ENCODE measurements at regions of chr17 and their contacts with region 1.

Region 1: GRCh38 chr17:40113110-40113906 is 8.5 kb upstream of the MSL1 start:
- DNase-seq: peak; percentile 98
- ATAC-seq: peak; percentile 80
- H3K4me3 Mint-ChIP-seq: peak overlapping the region; percentile 75
- H3K27ac Mint-ChIP-seq: peak overlapping the region; percentile 94
- H3K4me1 Mint-ChIP-seq: peaks cover 49% of the 10 kb centered on the region
- H3K27me3 Mint-ChIP-seq: no peaks in the 10 kb centered on the region
- CTCF ChIP-seq: peak; percentile 91

Region 2: DNA sequence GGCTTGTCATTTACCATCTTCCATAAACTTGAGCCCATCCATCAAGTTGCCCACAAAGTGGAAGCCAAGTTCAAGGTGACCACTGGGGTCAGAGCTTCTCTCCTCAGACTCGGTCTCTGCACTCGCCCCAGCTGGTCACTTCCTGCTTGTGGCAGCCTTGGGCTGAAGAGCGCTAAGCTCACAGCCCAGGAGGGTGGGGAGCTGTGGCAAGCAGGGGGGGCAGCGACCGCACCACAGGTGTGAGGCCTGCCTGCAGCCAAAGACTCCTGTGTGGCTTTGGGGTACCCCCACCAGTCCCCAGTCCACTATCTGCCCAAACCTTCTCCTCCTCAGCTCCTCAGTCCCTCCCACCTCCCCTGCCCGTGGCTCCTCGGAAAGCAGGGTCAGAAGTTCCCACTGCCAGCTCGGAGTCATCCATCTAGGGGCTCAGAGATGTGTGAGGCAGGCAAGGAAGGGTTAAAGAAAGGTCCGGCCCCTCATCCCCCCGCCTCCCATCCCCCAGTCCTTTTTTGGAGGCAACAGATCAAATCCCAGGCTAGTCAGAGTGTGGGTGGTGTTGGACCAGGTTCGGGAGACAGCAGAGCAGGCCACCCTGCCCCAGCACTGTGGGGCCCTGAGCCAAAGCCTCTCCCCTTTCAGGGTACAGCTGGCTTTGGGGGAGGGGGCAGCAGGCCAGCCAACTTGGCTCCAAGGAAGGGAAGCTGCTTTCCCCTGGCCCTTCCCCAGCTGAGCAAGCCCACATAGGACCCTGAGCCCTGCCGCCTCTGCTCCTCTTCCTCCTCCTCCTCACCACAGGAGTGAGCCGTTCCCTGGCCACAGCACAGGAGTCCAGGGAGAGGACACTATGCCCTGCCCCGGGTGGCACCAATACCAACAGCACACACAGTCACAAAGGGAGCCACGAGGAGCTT is 94.8 kb before region 1 on chr17:
- CTCF ChIA-PET with region 1: interaction called, 27 read pairs
- POLR2A ChIA-PET with region 1: no interaction called
- intact Hi-C with region 1: no loop called
- DNase-seq: no peak
- ATAC-seq: no peak
- H3K4me3 Mint-ChIP-seq: no peak overlapping the region
- H3K27ac Mint-ChIP-seq: no peak overlapping the region
- H3K4me1 Mint-ChIP-seq: no peaks in the 10 kb centered on the region
- H3K27me3 Mint-ChIP-seq: no peaks in the 10 kb centered on the region
- CTCF ChIP-seq: no peak

Region 3: DNA sequence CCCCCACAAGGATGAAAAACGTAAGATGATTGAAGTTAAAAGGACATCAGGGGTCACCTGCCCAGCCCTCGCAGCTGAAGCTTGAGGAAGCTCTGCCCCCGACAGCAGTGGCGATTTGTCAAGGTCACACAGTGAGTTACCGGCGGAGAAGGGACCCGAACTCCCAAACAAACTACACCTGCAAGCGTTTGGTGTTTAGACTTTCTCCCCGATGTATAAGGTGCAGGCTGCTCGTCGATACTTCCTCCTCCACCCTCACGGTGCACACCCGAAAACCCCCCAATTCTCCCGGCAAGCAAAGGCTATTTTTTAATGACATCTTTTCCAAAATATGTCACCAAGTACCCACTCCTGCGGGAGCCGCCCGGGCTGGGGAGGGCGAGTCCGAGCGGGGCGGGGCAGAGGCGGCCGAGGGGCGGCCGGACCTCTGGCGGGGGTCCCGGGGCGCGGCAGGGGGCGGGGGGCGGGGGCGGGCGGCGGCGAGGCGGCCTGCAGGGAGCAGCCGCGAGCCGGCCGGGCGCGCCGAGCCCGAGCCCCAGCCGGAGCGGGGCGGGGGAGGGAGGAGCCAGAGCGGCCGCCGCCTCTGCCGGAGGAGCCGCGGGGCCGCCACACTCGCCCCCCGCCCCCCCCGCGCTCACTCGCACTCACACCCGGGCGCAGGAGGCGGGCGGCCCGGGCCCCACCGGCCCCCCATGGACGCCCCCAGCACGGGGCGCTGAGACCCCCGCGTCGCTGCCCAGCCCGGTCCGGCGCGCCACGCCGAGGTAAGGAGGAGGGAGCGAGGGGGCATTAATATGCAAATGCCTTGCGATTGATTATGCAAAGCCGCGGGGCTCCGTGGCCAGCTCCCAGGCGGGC is 50.8 kb before region 1 on chr17 and contains the start of gene THRA:
- CTCF ChIA-PET with region 1: interaction called, 25 read pairs
- POLR2A ChIA-PET with region 1: interaction called, 5 read pairs
- intact Hi-C with region 1: loop called (anchors 5 kb)
- DNase-seq: peak; percentile 70
- ATAC-seq: peak; percentile 85
- H3K4me3 Mint-ChIP-seq: peak within 1 kb of the TSS; percentile 89
- H3K27ac Mint-ChIP-seq: peak within 1 kb of the TSS; percentile 84
- H3K4me1 Mint-ChIP-seq: peaks cover 43% of the 10 kb centered on the region
- H3K27me3 Mint-ChIP-seq: no peaks in the 10 kb centered on the region
- CTCF ChIP-seq: no peak
- total RNA-seq, gene THRA: 11.1 to 13.8 TPM

Region 4: GRCh38 chr17:40086150-40087044 is 26.9 kb before region 1 on chr17:
- CTCF ChIA-PET with region 1: interaction called, 29 read pairs
- POLR2A ChIA-PET with region 1: no interaction called
- intact Hi-C with region 1: no loop called
- DNase-seq: peak; percentile 71
- ATAC-seq: peak; percentile 78
- H3K4me3 Mint-ChIP-seq: no peak overlapping the region
- H3K27ac Mint-ChIP-seq: peak overlapping the region; percentile 55
- H3K4me1 Mint-ChIP-seq: peaks cover 8% of the 10 kb centered on the region
- H3K27me3 Mint-ChIP-seq: no peaks in the 10 kb centered on the region
- CTCF ChIP-seq: peak; percentile 95

Region 5: DNA sequence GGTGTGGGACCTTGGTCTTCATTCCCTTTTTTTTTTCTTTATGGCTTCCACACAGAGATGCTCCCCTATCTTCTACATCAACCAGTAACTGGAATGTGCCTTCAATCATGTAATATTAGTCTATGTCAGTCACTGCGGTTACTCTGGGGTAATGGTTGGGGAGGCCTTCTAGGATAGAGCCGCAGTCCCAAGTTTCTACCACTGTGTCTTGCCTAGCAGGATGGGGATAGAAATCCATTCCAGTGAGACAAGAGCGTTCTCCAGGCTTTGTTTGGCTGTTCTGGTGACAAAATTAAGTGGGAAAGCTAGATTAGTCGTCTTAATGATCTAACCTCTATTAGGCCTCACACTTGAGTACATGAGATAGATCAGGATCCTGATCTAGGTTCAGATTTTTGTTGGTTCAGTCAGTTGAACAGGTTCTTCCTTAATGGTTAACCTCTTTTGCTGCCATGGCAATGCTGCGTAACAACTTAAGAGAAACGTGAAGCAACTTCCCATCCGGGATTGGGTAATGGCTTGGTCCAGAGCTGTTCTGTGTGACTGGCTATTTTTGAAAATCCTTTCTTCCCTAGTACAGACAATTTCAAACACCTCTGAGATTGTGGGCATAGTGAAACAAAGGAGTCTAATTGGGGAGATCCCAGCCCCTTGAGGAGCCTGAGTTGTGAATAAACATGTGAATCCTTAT is 17.2 kb after region 1 on chr17:
- CTCF ChIA-PET with region 1: interaction called, 80 read pairs
- POLR2A ChIA-PET with region 1: interaction called, 50 read pairs
- intact Hi-C with region 1: no loop called
- DNase-seq: no peak
- ATAC-seq: no peak
- H3K4me3 Mint-ChIP-seq: no peak overlapping the region
- H3K27ac Mint-ChIP-seq: peak overlapping the region; percentile 18
- H3K4me1 Mint-ChIP-seq: peaks cover 14% of the 10 kb centered on the region
- H3K27me3 Mint-ChIP-seq: no peaks in the 10 kb centered on the region
- CTCF ChIP-seq: no peak

Region 6: GRCh38 chr17:40151414-40151963 is 38.2 kb after region 1 on chr17:
- CTCF ChIA-PET with region 1: interaction called, 10 read pairs
- POLR2A ChIA-PET with region 1: interaction called, 4 read pairs
- intact Hi-C with region 1: no loop called
- DNase-seq: no peak
- ATAC-seq: no peak
- H3K4me3 Mint-ChIP-seq: no peak overlapping the region
- H3K27ac Mint-ChIP-seq: peak overlapping the region; percentile 62
- H3K4me1 Mint-ChIP-seq: peaks cover 59% of the 10 kb centered on the region
- H3K27me3 Mint-ChIP-seq: no peaks in the 10 kb centered on the region
- CTCF ChIP-seq: no peak

Region 7: GRCh38 chr17:40168262-40168832 is 55.0 kb after region 1 on chr17:
- CTCF ChIA-PET with region 1: interaction called, 95 read pairs
- POLR2A ChIA-PET with region 1: interaction called, 10 read pairs
- intact Hi-C with region 1: loop called (anchors 1 kb)
- DNase-seq: peak; percentile 50
- ATAC-seq: peak; percentile 89
- H3K4me3 Mint-ChIP-seq: no peak overlapping the region
- H3K27ac Mint-ChIP-seq: peak overlapping the region; percentile 36
- H3K4me1 Mint-ChIP-seq: peaks cover 7% of the 10 kb centered on the region
- H3K27me3 Mint-ChIP-seq: no peaks in the 10 kb centered on the region
- CTCF ChIP-seq: peak; percentile 96

Region 8: DNA sequence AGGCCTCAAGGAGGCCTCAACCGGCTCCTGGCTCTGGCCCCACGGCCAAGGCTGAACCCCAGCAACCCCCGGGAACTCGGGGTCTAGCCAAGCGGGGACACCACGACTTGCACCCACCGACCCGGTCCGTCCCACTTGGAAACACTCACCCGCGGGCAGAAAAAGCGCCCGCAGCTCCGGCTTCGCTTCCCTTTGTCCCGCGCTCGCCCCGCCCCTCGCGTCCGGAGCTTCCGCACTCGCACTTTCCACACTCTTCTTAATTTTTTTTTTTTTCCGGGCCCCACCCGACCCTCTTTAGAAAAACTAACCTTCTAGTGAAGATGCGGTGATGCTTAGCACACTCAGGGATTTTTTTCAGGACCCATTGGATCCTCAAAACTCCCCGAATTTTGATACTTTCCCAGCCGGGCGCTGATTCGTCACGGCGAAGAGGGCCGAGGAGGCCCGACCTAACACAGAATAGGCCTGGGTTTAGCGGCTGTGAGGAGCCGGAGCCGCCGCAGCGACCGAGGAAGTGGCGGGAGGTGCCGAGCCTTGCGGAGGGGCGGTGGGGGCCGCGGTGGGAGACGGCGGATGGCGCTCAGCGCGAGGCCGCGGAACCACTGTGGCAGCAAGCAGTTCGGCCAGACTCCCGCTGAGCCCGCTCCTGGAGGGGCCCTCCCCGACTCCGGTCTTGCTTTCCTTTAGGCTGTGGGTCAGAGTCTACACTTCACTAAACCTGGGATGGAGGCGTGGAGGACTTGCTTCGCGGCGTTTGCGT is 534.5 kb after region 1 on chr17 and contains the start of gene SMARCE1:
- CTCF ChIA-PET with region 1: no interaction called
- POLR2A ChIA-PET with region 1: no interaction called
- intact Hi-C with region 1: no loop called
- DNase-seq: peak; percentile 70
- ATAC-seq: peak; percentile 74
- H3K4me3 Mint-ChIP-seq: peak within 1 kb of the TSS; percentile 81
- H3K27ac Mint-ChIP-seq: peak within 1 kb of the TSS; percentile 92
- H3K4me1 Mint-ChIP-seq: peaks cover 38% of the 10 kb centered on the region
- H3K27me3 Mint-ChIP-seq: no peaks in the 10 kb centered on the region
- CTCF ChIP-seq: no peak
- total RNA-seq, gene SMARCE1: 87.8 to 92.5 TPM